ENCODE measurements at regions of chr1 and their contacts with region 1.

Region 1: GRCh38 chr1:211336775-211337174 is 10.1 kb downstream of the TRAF5 start:
- DNase-seq: no peak
- H3K4me3 ChIP-seq: no peak overlapping the region
- H3K27me3 ChIP-seq: no peaks in the 10 kb centered on the region
- CTCF ChIP-seq: no peak

Region 2: GRCh38 chr1:211349741-211350140 is 13.0 kb after region 1 on chr1:
- CTCF ChIA-PET with region 1: interaction called, 12 read pairs
- POLR2A ChIA-PET with region 1: no interaction called
- DNase-seq: no peak
- H3K4me3 ChIP-seq: no peak overlapping the region
- H3K27me3 ChIP-seq: no peaks in the 10 kb centered on the region
- CTCF ChIP-seq: no peak

Measured in BJ (cell line).